ENCODE measurements at regions of chr4 and their contacts with region 1.

Region 1: DNA sequence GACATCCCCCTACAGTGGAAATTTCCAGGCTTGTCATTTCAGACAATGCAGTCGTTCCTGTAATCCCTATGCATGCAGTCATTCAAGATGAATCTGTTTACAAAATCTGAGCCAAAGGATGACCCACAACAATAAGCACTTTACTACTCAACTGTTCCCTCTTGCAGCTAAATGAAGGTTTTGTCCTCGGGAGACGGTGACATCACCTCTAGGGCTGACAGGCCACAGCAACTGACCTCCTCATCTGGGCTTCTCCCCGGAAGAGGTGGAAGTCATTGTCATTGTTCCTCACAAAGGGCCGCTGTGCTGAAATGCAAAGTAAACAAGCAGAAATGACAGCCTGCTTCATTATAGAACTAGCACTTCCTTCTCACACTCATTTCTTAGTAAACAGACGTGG is 29.2 kb downstream of the CLRN2 start:
- DNase-seq: no peak
- H3K4me3 Mint-ChIP-seq: no peak overlapping the region
- H3K27ac Mint-ChIP-seq: no peak overlapping the region
- H3K4me1 Mint-ChIP-seq: no peaks in the 10 kb centered on the region
- H3K27me3 Mint-ChIP-seq: peaks cover 11% of the 10 kb centered on the region
- CTCF ChIP-seq: no peak

Region 2: DNA sequence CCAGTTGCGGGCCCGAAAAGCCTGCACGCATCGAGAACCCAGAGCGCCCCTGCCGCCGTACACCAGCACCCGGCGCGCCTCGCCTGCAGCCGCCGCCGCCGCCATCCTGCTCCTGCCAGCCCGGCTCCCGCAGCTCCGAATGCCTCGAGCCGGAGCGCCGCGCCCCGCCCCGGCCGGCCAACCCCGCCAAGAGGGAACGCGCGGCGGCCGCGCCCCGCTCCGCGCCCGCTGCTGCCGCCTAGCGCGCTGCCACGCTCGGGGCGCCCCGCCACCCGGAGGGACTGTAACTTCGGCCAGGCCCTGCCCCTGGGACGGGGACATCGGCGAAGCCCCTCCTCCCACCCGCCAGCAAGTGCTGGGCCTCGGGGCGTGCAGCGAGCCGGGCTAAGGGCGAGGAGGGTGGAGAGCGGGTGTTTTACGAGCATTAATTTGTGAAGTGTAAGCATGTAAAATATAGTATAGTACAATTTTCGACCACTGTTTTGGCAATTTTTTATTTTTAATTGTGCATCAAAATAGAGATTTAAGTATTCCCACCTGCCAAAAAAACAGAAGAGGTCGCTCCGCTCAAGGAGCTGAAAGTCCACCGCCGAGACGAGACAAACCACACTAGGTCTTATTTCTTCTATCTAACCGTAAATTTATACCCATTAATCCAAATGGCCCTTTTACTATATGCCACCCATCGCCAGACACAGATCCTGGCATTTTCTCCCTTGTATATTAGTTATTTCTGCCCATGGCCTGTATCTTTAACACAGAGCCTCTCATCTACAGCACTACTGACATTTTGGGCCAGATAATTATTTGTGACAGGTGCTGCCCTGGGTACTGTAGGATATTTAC is 32.0 kb before region 1 on chr4 and contains the start of gene QDPR:
- CTCF ChIA-PET with region 1: interaction called, 4 read pairs
- POLR2A ChIA-PET with region 1: interaction called, 11 read pairs
- intact Hi-C with region 1: no loop called
- DNase-seq: peak; percentile 71
- H3K4me3 Mint-ChIP-seq: peak within 1 kb of the TSS; percentile 88
- H3K27ac Mint-ChIP-seq: peak within 1 kb of the TSS; percentile 75
- H3K4me1 Mint-ChIP-seq: peaks cover 37% of the 10 kb centered on the region
- H3K27me3 Mint-ChIP-seq: no peaks in the 10 kb centered on the region
- CTCF ChIP-seq: peak; percentile 44
- total RNA-seq, gene QDPR: 35.2 and 39.2 TPM in 2 replicates

Region 3: GRCh38 chr4:17636696-17637622 is 92.8 kb after region 1 on chr4:
- CTCF ChIA-PET with region 1: interaction called, 24 read pairs
- POLR2A ChIA-PET with region 1: interaction called, 4 read pairs
- intact Hi-C with region 1: loop called (anchors 1 kb)
- DNase-seq: peak; percentile 80
- H3K4me3 Mint-ChIP-seq: no peak overlapping the region
- H3K27ac Mint-ChIP-seq: no peak overlapping the region
- H3K4me1 Mint-ChIP-seq: no peaks in the 10 kb centered on the region
- H3K27me3 Mint-ChIP-seq: no peaks in the 10 kb centered on the region
- CTCF ChIP-seq: peak; percentile 79

Region 4: DNA sequence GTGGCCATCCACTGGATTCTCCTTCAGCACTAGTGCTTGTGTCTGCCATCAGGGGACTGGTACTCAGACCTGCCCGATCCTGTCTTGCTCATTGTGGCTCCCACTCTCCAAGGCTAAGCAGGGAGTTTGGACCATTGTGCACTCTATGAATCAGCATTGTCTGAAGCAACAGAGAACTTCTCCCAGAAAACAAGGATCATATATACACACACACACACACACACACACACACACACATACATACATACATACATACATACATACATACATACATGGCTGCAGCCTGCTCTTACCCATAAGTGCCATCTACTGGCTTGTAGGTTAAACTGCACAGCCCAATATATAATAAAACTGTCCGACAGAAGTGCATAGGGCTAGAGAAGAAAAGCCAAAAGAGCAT is 822.7 kb after region 1 on chr4:
- CTCF ChIA-PET with region 1: interaction called, 5 read pairs
- POLR2A ChIA-PET with region 1: no interaction called
- intact Hi-C with region 1: loop called (anchors 1 kb)
- DNase-seq: peak; percentile 51
- H3K4me3 Mint-ChIP-seq: no peak overlapping the region
- H3K27ac Mint-ChIP-seq: no peak overlapping the region
- H3K4me1 Mint-ChIP-seq: peaks cover 6% of the 10 kb centered on the region
- H3K27me3 Mint-ChIP-seq: no peaks in the 10 kb centered on the region
- CTCF ChIP-seq: peak; percentile 62

Region 5: DNA sequence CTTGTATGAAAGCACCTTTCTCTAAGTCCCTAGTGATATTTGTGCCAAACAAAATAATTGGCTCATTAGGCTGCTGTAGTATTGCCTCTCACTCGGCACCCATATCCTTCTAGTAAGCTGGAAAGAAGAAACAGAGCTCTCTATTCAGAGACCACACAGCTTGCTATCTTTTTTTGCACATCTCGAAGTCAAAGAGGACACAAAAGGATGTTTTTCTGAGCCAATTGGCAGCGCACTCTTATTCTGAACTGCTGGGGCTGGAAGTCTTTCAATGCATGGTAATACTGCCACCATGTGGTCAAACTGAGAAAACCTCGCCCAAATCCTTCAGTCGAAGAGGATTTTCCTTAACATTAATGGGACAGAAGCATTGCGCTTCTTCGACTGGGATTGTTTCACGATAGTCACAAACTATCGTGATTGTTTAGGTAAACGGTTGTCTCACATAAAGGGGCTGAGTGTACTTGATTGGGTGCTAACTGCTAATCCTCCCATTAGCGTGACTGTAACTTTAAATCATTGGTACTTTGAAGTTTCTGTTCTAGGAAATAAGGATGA is 1049.3 kb after region 1 on chr4:
- CTCF ChIA-PET with region 1: interaction called, 10 read pairs
- POLR2A ChIA-PET with region 1: no interaction called
- intact Hi-C with region 1: loop called (anchors 1 kb)
- DNase-seq: peak; percentile 79
- H3K4me3 Mint-ChIP-seq: peak overlapping the region; percentile 54
- H3K27ac Mint-ChIP-seq: no peak overlapping the region
- H3K4me1 Mint-ChIP-seq: peaks cover 6% of the 10 kb centered on the region
- H3K27me3 Mint-ChIP-seq: no peaks in the 10 kb centered on the region
- CTCF ChIP-seq: peak; percentile 67